ENCODE measurements at regions of chr14 and their contacts with region 1.

Region 1: DNA sequence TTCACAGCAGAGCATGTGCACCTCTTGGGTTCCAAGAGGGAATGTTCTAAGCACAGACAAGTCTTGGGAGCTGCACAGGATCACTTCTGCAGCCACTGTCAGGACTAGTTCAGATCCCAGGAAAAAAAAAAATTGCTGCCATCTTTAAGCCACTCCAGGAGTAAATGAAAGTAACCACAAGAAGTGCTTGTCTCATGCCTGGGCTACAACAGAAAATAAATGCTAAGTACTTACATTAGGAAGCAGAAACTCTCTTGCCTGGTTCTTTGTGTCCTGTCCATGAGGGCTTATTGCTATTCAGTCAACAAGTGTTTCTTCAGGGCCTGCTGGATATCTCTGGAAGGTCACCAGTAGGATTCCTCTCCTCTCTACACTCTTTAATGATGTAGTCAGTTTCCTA is 176.1 kb downstream of the KTN1 start:
- DNase-seq: no peak
- H3K4me3 ChIP-seq: no peak overlapping the region
- H3K27ac ChIP-seq: no peak overlapping the region
- H3K4me1 ChIP-seq: peaks cover 0 to 7% (median 0%) of the 10 kb centered on the region in 4 donors
- H3K27me3 ChIP-seq: no peaks in the 10 kb centered on the region
- CTCF ChIP-seq: no peak

Region 2: DNA sequence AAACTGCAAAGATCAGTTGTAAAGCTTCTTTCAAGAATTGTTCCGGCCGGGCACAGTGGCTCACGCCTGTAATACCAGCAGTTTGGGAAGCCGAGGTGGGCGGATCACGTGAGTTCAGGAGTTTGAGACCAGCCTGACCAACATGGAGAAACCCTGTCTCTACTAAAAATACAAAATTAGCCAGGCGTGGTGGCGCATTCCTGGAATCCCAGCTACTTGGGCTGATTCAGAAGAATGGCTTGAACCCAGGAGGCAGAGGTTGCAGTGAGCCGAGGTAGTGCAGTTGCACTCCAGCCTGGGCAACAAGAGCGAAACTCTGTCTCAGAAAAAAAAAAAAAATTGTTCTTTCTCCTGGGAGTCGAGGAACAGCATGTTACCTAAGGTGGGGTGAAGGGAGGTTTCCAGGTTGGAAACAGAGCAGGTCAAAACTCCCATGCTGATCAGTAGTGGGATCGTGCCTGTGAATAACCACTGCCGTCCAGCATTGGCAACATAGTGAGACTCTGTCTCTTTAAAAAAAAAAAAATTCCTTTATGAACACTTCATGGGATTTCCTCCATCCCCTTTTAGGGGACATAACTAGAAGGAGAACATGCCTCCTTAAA is 470.9 kb before region 1 on chr14:
- intact Hi-C with region 1: no loop called
- DNase-seq: no peak
- H3K4me3 ChIP-seq: no peak overlapping the region
- H3K27ac ChIP-seq: no peak overlapping the region
- H3K4me1 ChIP-seq: peaks cover 0 to 34% (median 6%) of the 10 kb centered on the region in 4 donors
- H3K27me3 ChIP-seq: no peaks in the 10 kb centered on the region
- CTCF ChIP-seq: no peak

Region 3: DNA sequence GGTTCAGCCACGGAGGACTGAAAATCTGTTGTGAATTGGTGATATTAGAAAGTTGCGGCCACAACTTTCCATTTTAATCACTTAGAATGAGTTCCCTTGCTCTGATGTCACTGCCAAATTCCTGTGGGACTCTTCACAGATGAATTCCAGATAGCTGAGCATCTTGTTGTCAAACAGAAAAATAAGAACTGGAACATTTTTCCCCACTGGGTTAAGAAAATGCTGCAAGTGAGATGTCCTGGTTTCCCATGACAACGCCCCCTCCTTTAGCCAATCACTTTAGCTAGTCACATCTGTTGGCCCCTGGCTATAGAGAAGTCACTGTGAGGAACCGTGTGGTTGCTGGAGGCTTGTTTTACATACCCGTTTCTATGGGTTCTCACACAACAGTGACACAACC is 40.2 kb before region 1 on chr14:
- intact Hi-C with region 1: no loop called
- DNase-seq: peak; percentile 78 to 81
- H3K4me3 ChIP-seq: no peak overlapping the region
- H3K27ac ChIP-seq: no peak overlapping the region
- H3K4me1 ChIP-seq: peaks cover 0 to 10% (median under 1%) of the 10 kb centered on the region in 4 donors
- H3K27me3 ChIP-seq: no peaks in the 10 kb centered on the region
- CTCF ChIP-seq: no peak

Region 4: DNA sequence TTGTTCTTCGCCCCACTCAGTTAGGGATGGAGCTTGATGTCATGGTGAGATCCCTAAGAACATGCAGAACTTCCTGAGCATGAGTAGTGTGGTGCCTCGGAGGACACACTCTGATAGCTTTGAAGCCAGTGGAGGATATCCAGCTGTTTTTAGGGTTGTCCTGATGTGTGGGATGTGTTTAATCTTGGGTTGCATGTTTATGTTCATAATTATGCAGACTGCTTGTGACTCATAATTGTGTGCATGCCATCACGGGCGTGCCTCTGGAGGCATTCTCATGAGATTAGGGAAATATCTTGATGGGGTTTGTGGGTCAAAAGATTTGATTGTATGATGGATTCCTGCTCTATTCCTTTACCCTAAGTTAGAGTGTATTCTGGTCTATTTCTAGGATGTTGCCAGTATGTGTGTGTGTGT is 94.8 kb after region 1 on chr14:
- intact Hi-C with region 1: no loop called
- DNase-seq: no peak
- H3K4me3 ChIP-seq: no peak overlapping the region
- H3K27ac ChIP-seq: no peak overlapping the region
- H3K4me1 ChIP-seq: peaks cover 0 to 41% (median 17%) of the 10 kb centered on the region in 4 donors
- H3K27me3 ChIP-seq: no peaks in the 10 kb centered on the region
- CTCF ChIP-seq: no peak

Region 5: DNA sequence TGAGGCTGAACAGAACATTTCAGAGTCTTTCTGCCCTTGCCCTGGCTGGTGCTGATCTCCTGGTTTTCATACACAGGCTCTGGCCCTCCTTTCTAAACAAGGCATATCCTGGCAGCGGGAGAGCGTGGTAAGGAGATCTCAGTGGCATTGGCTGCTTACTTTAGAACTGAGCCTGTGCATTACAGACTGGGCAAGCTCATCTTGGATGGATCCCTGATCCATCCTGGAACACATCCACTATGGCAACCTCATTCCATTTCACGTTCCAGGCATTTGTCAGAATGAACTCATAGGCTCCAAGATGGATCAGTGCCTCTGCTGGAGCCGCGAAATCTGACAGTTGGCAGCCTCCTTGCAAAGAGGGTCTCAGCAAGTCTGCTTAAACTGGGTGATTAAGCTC is 137.6 kb after region 1 on chr14:
- intact Hi-C with region 1: no loop called
- DNase-seq: no peak
- H3K4me3 ChIP-seq: no peak overlapping the region
- H3K27ac ChIP-seq: no peak overlapping the region
- H3K4me1 ChIP-seq: no peaks in the 10 kb centered on the region
- H3K27me3 ChIP-seq: no peaks in the 10 kb centered on the region
- CTCF ChIP-seq: no peak

Region 6: GRCh38 chr14:55957950-55958349 is 201.9 kb after region 1 on chr14:
- intact Hi-C with region 1: loop called (anchors 1 kb)
- DNase-seq: no peak
- H3K4me3 ChIP-seq: no peak overlapping the region
- H3K27ac ChIP-seq: no peak overlapping the region
- H3K4me1 ChIP-seq: no peaks in the 10 kb centered on the region
- H3K27me3 ChIP-seq: no peaks in the 10 kb centered on the region
- CTCF ChIP-seq: no peak